MCF 10A (cell line): ENCODE measurements at regions of chr17 and their contacts with region 1.

Region 1: GRCh38 chr17:2564878-2565277 is 28.6 kb upstream of the PAFAH1B1 start:
- DNase-seq: peak; percentile 68
- H3K4me3 Mint-ChIP-seq: peak overlapping the region; percentile 33
- H3K27ac Mint-ChIP-seq: peak overlapping the region; percentile 95
- H3K4me1 Mint-ChIP-seq: peaks cover 18% of the 10 kb centered on the region
- H3K27me3 Mint-ChIP-seq: no peaks in the 10 kb centered on the region
- CTCF ChIP-seq: no peak

Region 2: GRCh38 chr17:2366747-2367494 is 198.0 kb before region 1 on chr17:
- CTCF ChIA-PET with region 1: no interaction called
- POLR2A ChIA-PET with region 1: no interaction called
- intact Hi-C with region 1: no loop called
- DNase-seq: no peak
- H3K4me3 Mint-ChIP-seq: no peak overlapping the region
- H3K27ac Mint-ChIP-seq: no peak overlapping the region
- H3K4me1 Mint-ChIP-seq: no peaks in the 10 kb centered on the region
- H3K27me3 Mint-ChIP-seq: no peaks in the 10 kb centered on the region
- CTCF ChIP-seq: no peak

Region 3: GRCh38 chr17:2547176-2547575 is 17.7 kb before region 1 on chr17:
- CTCF ChIA-PET with region 1: no interaction called
- POLR2A ChIA-PET with region 1: interaction called, 16 read pairs
- intact Hi-C with region 1: no loop called
- DNase-seq: peak; percentile 87
- H3K4me3 Mint-ChIP-seq: no peak overlapping the region
- H3K27ac Mint-ChIP-seq: no peak overlapping the region
- H3K4me1 Mint-ChIP-seq: peaks cover 5% of the 10 kb centered on the region
- H3K27me3 Mint-ChIP-seq: no peaks in the 10 kb centered on the region
- CTCF ChIP-seq: no peak

Region 4: DNA sequence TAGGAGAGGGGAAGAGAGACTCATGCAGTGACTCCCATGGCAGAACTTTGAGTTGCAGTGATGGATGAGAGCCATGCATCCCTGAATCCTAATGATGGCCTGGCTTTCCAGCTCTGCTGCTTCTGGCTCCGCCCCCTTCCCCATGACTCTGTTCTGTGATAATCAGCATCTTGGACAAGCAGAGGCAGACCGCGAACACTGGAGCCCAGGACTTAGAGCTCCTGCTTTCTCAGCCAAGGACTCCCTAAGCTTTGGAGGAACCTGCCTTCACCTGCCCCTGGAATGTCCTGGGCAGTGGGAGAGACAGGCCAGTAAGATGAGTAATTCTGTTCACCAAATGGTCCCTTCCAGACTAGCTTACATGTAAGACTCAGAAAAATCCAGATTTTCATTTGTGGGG is 172.1 kb after region 1 on chr17:
- CTCF ChIA-PET with region 1: no interaction called
- POLR2A ChIA-PET with region 1: no interaction called
- intact Hi-C with region 1: no loop called
- DNase-seq: peak; percentile 47
- H3K4me3 Mint-ChIP-seq: no peak overlapping the region
- H3K27ac Mint-ChIP-seq: no peak overlapping the region
- H3K4me1 Mint-ChIP-seq: no peaks in the 10 kb centered on the region
- H3K27me3 Mint-ChIP-seq: peaks cover 3% of the 10 kb centered on the region
- CTCF ChIP-seq: no peak